Cardiac septum (tissue), 1 donor: ENCODE measurements at regions of chr3 and their contacts with region 1.

Region 1: GRCh38 chr3:12706504-12707253 is 42.8 kb upstream of the RAF1 start:
- DNase-seq: no peak

Region 2: DNA sequence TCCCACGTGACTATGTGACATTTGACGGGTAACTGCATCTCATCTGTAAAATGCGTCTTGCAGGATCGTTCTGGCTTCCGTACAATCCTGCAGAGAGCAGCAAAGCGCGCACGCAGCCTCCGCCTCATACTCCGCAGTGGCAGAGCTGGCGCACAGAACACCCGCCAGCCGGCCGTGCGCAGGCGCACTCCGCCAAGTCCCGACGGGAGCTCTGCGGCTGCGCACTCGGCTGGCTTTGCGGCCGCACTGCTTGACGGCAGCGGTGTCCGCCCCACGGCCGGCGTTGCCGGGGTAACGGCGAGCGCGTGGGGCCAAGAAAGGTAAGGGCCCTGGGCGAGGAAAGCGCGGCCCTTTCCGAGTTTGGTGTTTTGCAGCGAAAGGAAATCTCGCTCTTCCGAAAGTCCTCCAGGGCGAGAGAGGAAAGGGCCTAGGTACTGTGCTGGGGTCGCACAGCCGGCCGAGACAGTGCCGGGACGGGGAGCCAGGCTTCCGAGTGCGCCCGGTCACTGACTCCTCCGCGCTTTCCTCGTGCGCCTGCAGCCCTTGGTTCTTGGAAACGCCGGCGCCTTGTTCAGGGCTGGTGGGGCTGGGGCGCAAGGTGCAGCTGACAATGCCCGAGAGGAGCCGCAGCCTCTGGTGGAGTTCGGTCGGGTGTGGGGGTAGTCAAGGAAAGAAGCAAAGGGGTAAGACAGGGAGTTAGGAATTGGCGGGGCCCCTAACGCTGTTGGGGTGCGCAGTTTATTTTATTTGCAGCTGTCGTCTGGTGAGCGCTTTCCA is 222.3 kb before region 1 on chr3 and contains the start of gene TSEN2:
- intact Hi-C with region 1: no loop called
- DNase-seq: peak; percentile 97
- total RNA-seq, gene TSEN2: 11.1 TPM

Region 3: DNA sequence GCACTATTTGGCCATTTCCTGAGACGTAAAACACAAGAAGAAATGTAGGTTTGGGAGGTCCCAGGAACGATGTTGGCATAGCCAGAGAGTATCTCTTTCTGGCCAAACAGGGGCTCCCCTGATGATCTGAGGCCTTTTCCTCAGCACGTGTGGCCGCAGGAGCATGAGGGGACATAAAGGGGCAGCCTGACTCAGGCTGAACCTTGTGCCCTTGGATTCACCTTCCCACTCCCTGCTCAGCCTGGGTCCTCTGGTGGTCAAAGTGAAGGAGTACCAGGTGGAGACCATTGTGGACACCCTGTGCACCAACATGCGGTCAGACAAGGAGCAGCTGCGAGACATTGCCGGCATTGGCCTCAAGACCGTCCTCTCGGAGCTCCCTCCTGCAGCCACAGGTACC is 100.4 kb after region 1 on chr3:
- intact Hi-C with region 1: loop called (anchors 5 kb)
- DNase-seq: peak; percentile 31

Region 4: DNA sequence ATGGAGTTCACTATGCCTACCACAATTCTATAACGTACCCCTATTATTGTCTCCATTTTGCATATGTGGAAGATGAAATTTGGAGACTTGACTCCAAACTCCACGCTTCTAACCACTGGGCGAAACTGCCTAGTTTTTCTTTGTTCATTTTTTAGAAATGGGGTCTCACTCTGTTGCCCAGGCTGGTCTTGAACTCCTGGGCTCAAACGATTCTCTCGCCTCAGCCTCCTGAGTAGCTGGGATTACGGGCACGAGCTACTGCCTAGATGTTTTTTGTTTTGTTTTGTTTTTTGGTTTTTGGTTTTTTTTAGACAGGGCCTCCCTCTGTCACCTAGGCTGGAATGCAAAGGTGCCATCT is 135.3 kb after region 1 on chr3:
- intact Hi-C with region 1: loop called (anchors 2 kb)
- DNase-seq: no peak